CD4-positive, alpha-beta memory T cell (primary cell): ENCODE measurements at regions of chr1 and their contacts with region 1.

Region 1: DNA sequence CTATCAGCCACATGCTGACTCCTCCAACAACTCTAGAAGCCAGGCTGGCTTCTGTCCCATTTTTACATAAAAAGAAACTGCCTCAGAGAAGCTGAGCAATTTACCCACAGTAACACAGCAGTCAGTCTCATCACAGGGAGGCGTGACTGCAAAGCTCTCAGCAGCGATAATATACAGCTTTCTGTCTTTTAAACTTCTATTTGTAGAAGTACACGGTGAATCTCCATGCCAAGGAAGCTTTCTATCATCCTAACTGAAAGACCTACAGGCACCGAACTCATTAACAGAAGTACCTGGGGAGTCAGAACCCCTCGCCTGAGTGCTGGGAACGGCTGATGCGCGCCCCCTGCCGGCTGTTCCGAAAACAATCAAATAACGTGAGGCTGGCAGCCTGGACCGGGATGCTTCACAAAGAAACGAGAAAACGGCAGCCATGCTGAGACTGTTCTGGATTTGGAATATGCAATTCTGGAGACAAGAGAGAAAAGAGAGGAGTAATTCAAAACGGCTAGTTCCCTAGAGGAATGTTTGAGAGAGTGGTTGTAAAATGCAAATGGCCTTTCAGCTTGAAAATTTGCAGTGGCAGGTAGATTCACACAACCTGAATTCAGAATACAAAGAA is 43.5 kb upstream of the RAB4A start:
- DNase-seq: peak; percentile 73 to 81 (median 80)
- H3K4me3 ChIP-seq: no peak overlapping the region
- H3K4me3 Mint-ChIP-seq: peak overlapping the region in 2 of 8 donors; percentile 12 to 53
- H3K27ac ChIP-seq: no peak overlapping the region
- H3K27ac Mint-ChIP-seq: peak overlapping the region in 1 of 7 donors; percentile 11
- H3K4me1 ChIP-seq: peaks cover 10% of the 10 kb centered on the region
- H3K4me1 Mint-ChIP-seq: peaks cover 6 to 16% (median 10%) of the 10 kb centered on the region in 4 donors
- H3K27me3 ChIP-seq: peaks cover 4% of the 10 kb centered on the region
- H3K27me3 Mint-ChIP-seq: no peaks in the 10 kb centered on the region

Region 2: GRCh38 chr1:228691926-228692325 is 535.5 kb before region 1 on chr1:
- CTCF ChIA-PET with region 1: interaction called, 48 read pairs
- POLR2A ChIA-PET with region 1: interaction called, 3 read pairs
- intact Hi-C with region 1: loop called (anchors 1 kb)
- DNase-seq: peak; percentile 30 to 46 (median 43)
- H3K4me3 ChIP-seq: no peak overlapping the region
- H3K4me3 Mint-ChIP-seq: no peak overlapping the region
- H3K27ac ChIP-seq: no peak overlapping the region
- H3K27ac Mint-ChIP-seq: no peak overlapping the region
- H3K4me1 ChIP-seq: peaks cover 9% of the 10 kb centered on the region
- H3K4me1 Mint-ChIP-seq: peaks cover 6 to 10% (median 9%) of the 10 kb centered on the region in 4 donors
- H3K27me3 ChIP-seq: no peaks in the 10 kb centered on the region
- H3K27me3 Mint-ChIP-seq: peaks cover 9 to 10% of the 10 kb centered on the region in 2 donors

Region 3: DNA sequence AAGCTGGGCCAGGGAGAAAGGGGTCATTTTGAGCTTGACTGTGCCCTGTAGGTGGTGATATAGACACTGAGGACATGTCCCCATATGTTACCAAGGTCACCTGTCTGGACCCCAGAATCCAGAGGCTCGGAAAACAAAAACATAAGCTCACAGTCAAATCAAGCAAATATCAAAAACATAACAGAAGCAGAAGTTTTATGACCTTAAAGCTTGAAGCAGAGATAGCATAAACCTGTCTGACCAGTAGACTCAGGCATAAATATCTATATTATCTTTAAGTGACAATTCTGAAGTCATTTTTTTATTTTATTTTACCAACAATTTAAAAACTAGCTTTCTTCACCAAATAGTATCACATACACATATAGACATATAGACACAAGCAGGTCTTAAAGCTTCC is 525.0 kb before region 1 on chr1:
- CTCF ChIA-PET with region 1: interaction called, 14 read pairs
- POLR2A ChIA-PET with region 1: no interaction called
- intact Hi-C with region 1: no loop called
- DNase-seq: no peak
- H3K4me3 ChIP-seq: no peak overlapping the region
- H3K4me3 Mint-ChIP-seq: no peak overlapping the region
- H3K27ac ChIP-seq: no peak overlapping the region
- H3K27ac Mint-ChIP-seq: no peak overlapping the region
- H3K4me1 ChIP-seq: no peaks in the 10 kb centered on the region
- H3K4me1 Mint-ChIP-seq: no peaks in the 10 kb centered on the region
- H3K27me3 ChIP-seq: no peaks in the 10 kb centered on the region
- H3K27me3 Mint-ChIP-seq: peaks cover 0 to 2% of the 10 kb centered on the region in 2 donors

Region 4: GRCh38 chr1:229087339-229087738 is 140.1 kb before region 1 on chr1:
- CTCF ChIA-PET with region 1: no interaction called
- POLR2A ChIA-PET with region 1: no interaction called
- intact Hi-C with region 1: no loop called
- DNase-seq: no peak
- H3K4me3 ChIP-seq: no peak overlapping the region
- H3K4me3 Mint-ChIP-seq: no peak overlapping the region
- H3K27ac ChIP-seq: no peak overlapping the region
- H3K27ac Mint-ChIP-seq: no peak overlapping the region
- H3K4me1 ChIP-seq: no peaks in the 10 kb centered on the region
- H3K4me1 Mint-ChIP-seq: peaks cover 0 to 4% (median under 1%) of the 10 kb centered on the region in 4 donors
- H3K27me3 ChIP-seq: no peaks in the 10 kb centered on the region
- H3K27me3 Mint-ChIP-seq: peaks cover 0 to 3% of the 10 kb centered on the region in 2 donors

Region 5: GRCh38 chr1:229158341-229158921 is 69.0 kb before region 1 on chr1:
- CTCF ChIA-PET with region 1: no interaction called
- POLR2A ChIA-PET with region 1: no interaction called
- intact Hi-C with region 1: no loop called
- DNase-seq: no peak
- H3K4me3 ChIP-seq: no peak overlapping the region
- H3K4me3 Mint-ChIP-seq: no peak overlapping the region
- H3K27ac ChIP-seq: no peak overlapping the region
- H3K27ac Mint-ChIP-seq: no peak overlapping the region
- H3K4me1 ChIP-seq: peaks cover 26% of the 10 kb centered on the region
- H3K4me1 Mint-ChIP-seq: peaks cover 14 to 36% (median 31%) of the 10 kb centered on the region in 4 donors
- H3K27me3 ChIP-seq: no peaks in the 10 kb centered on the region
- H3K27me3 Mint-ChIP-seq: no peaks in the 10 kb centered on the region

Region 6: DNA sequence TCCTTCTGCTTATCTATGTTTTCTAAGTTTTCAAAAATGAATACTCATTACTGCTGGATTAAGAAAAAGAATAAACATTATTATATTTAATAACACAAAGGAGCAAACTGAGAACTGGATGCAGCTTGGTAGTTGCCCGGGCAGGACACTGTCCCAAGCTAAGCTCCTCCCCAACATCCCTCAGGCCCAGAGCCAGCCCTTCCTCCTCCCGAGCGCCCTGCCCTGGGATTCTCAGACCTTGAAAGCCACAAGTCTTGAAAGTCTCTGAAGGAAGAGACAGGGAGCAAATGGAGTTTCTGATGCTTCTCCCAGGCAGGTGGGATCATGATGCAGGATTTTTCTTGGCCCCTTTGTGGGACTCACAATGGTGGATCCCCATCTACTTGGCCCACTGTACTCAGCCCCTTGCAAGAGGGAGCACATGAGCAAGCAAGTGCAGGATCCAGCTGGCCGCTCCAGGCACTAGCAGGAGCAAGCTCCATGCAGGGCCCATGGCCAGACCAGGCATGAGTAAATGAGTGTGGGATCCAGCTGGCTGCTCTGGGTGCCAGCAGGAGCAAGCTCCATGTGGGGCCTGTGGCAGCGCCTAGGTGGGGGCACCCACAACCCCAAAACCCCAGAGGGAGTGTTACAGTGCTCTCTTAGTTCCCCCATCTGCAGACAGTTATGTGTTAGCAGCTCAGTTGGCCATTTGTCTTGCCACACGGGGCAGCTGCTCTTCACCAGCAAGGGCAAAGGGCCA is 11.4 kb after region 1 on chr1:
- CTCF ChIA-PET with region 1: interaction called, 37 read pairs
- POLR2A ChIA-PET with region 1: no interaction called
- intact Hi-C with region 1: no loop called
- DNase-seq: no peak
- H3K4me3 ChIP-seq: no peak overlapping the region
- H3K4me3 Mint-ChIP-seq: no peak overlapping the region
- H3K27ac ChIP-seq: no peak overlapping the region
- H3K27ac Mint-ChIP-seq: peak overlapping the region in 1 of 7 donors; percentile 48
- H3K4me1 ChIP-seq: no peaks in the 10 kb centered on the region
- H3K4me1 Mint-ChIP-seq: no peaks in the 10 kb centered on the region
- H3K27me3 ChIP-seq: no peaks in the 10 kb centered on the region
- H3K27me3 Mint-ChIP-seq: peaks cover 0 to 10% of the 10 kb centered on the region in 2 donors